MCF 10A (cell line): ENCODE measurements at regions of chr9 and their contacts with region 1.

Region 1: DNA sequence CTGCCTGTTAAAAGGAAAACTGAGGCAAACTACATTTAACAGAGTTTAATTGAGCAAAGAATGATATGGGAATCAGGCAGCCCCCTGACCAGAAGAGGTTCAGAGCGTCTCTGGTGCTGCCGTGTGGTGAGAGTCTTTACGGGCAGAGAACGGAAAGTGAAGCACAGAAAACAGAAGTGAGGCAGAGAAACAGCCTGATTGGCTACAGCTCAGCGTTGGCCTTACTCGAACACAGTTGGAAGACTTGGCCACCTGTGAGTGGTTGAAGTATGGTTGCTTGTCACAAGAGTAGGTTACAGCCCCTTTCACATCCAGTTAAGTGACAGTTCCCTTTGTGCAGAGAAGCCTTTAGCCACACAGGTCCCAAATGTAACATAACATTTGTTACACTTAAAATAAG is 16.9 kb upstream of the FBP1 start:
- DNase-seq: no peak
- H3K4me3 Mint-ChIP-seq: no peak overlapping the region
- H3K27ac Mint-ChIP-seq: no peak overlapping the region
- H3K4me1 Mint-ChIP-seq: peaks cover 2% of the 10 kb centered on the region
- H3K27me3 Mint-ChIP-seq: no peaks in the 10 kb centered on the region
- CTCF ChIP-seq: no peak

Region 2: GRCh38 chr9:94630281-94631232 is 25.6 kb before region 1 on chr9:
- CTCF ChIA-PET with region 1: no interaction called
- POLR2A ChIA-PET with region 1: no interaction called
- intact Hi-C with region 1: no loop called
- DNase-seq: no peak
- H3K4me3 Mint-ChIP-seq: no peak overlapping the region
- H3K27ac Mint-ChIP-seq: no peak overlapping the region
- H3K4me1 Mint-ChIP-seq: peaks cover 5% of the 10 kb centered on the region
- H3K27me3 Mint-ChIP-seq: no peaks in the 10 kb centered on the region
- CTCF ChIP-seq: no peak

Region 3: GRCh38 chr9:94672811-94673487 is 16.7 kb after region 1 on chr9:
- CTCF ChIA-PET with region 1: interaction called, 10 read pairs
- POLR2A ChIA-PET with region 1: no interaction called
- intact Hi-C with region 1: no loop called
- DNase-seq: peak; percentile 38
- H3K4me3 Mint-ChIP-seq: no peak overlapping the region
- H3K27ac Mint-ChIP-seq: peak overlapping the region; percentile 60
- H3K4me1 Mint-ChIP-seq: peaks cover 24% of the 10 kb centered on the region
- H3K27me3 Mint-ChIP-seq: no peaks in the 10 kb centered on the region
- CTCF ChIP-seq: no peak